Activated CD8-positive, alpha-beta T cell treated with anti-CD3 and anti-CD28 coated beads for 36 hours (primary cell): ENCODE measurements at regions of chr16 and their contacts with region 1.

Region 1: GRCh38 chr16:75110637-75111513 is 5.7 kb downstream of the LDHD start:
- DNase-seq: peak; percentile 92
- ATAC-seq: peak; percentile 80
- H3K4me3 Mint-ChIP-seq: peak overlapping the region; percentile 74
- H3K27ac Mint-ChIP-seq: peak overlapping the region; percentile 68
- H3K4me1 Mint-ChIP-seq: peaks cover 54% of the 10 kb centered on the region
- H3K27me3 Mint-ChIP-seq: peaks cover 10% of the 10 kb centered on the region
- CTCF ChIP-seq: peak; percentile 89

Region 2: GRCh38 chr16:74984535-74985296 is 126.2 kb before region 1 on chr16 and contains the start of gene WDR59:
- CTCF ChIA-PET with region 1: interaction called, 34 read pairs
- POLR2A ChIA-PET with region 1: interaction called, 9 read pairs
- intact Hi-C with region 1: no loop called
- DNase-seq: peak; percentile 100
- ATAC-seq: peak; percentile 99
- H3K4me3 Mint-ChIP-seq: peak within 1 kb of the TSS; percentile 86
- H3K27ac Mint-ChIP-seq: peak within 1 kb of the TSS; percentile 91
- H3K4me1 Mint-ChIP-seq: peaks cover 21% of the 10 kb centered on the region
- H3K27me3 Mint-ChIP-seq: no peaks in the 10 kb centered on the region
- CTCF ChIP-seq: no peak
- total RNA-seq, gene WDR59: 59.1 to 68.1 TPM

Region 3: GRCh38 chr16:75011634-75012307 is 99.1 kb before region 1 on chr16:
- CTCF ChIA-PET with region 1: interaction called, 48 read pairs
- POLR2A ChIA-PET with region 1: interaction called, 3 read pairs
- intact Hi-C with region 1: no loop called
- DNase-seq: peak; percentile 78
- ATAC-seq: peak; percentile 95
- H3K4me3 Mint-ChIP-seq: peak overlapping the region; percentile 39
- H3K27ac Mint-ChIP-seq: peak overlapping the region; percentile 83
- H3K4me1 Mint-ChIP-seq: peaks cover 32% of the 10 kb centered on the region
- H3K27me3 Mint-ChIP-seq: no peaks in the 10 kb centered on the region
- CTCF ChIP-seq: no peak

Region 4: GRCh38 chr16:75064403-75065148 is 46.3 kb before region 1 on chr16:
- CTCF ChIA-PET with region 1: interaction called, 14 read pairs
- POLR2A ChIA-PET with region 1: interaction called, 3 read pairs
- intact Hi-C with region 1: no loop called
- DNase-seq: peak; percentile 56
- ATAC-seq: peak; percentile 54
- H3K4me3 Mint-ChIP-seq: peak overlapping the region; percentile 55
- H3K27ac Mint-ChIP-seq: peak overlapping the region; percentile 68
- H3K4me1 Mint-ChIP-seq: peaks cover 30% of the 10 kb centered on the region
- H3K27me3 Mint-ChIP-seq: peaks cover 2% of the 10 kb centered on the region
- CTCF ChIP-seq: no peak

Region 5: DNA sequence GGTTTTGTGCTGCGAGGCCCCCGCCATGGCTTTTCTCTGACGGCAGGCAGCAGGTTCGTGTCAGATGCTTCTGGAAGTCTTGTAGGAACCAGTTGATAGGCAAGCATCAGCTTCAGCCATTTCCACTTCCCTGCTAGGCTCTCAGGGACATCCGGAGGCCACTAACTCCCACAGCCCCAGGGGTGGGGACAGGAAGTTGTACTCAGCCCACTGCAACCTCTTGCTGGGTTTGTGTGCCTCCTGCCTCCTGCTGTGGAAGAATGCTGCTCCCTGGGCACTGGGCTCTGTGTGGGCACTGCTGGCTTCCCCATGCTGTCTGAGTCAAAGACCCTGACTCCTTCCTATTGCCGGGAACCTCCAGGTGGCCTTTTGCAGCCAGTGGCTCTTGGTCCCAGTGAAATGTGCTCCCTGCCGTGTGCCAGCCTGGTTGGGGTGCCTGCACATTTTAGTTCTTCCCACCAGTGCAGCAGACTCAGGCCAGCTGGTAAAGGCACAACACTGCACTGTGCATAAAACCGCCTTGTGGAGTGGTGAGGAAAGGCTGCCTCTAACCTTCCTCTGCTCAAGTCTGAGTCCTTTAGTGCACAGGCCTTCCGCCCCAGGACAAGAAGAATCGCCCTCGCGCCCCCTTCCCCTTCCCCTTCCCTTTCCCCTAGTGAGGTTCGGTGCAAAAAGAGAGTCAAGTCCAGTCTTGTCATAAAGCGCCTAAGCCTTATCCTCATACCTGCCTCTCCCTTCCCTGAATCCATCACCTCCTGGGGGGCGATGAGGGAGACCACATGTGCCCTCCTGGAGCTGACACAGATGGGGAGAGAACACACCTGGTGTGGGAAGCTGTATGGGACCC is 10.9 kb before region 1 on chr16:
- CTCF ChIA-PET with region 1: interaction called, 50 read pairs
- POLR2A ChIA-PET with region 1: interaction called, 20 read pairs
- intact Hi-C with region 1: no loop called
- DNase-seq: peak; percentile 72
- ATAC-seq: peak; percentile 52
- H3K4me3 Mint-ChIP-seq: peak overlapping the region; percentile 24
- H3K27ac Mint-ChIP-seq: peak overlapping the region; percentile 92
- H3K4me1 Mint-ChIP-seq: peaks cover 54% of the 10 kb centered on the region
- H3K27me3 Mint-ChIP-seq: no peaks in the 10 kb centered on the region
- CTCF ChIP-seq: no peak

Region 6: GRCh38 chr16:75148311-75149195 is 37.7 kb after region 1 on chr16 and contains the start of gene ZFP1:
- CTCF ChIA-PET with region 1: interaction called, 13 read pairs
- POLR2A ChIA-PET with region 1: no interaction called
- intact Hi-C with region 1: no loop called
- DNase-seq: peak; percentile 98
- ATAC-seq: peak; percentile 92
- H3K4me3 Mint-ChIP-seq: peak within 1 kb of the TSS; percentile 84
- H3K27ac Mint-ChIP-seq: peak within 1 kb of the TSS; percentile 83
- H3K4me1 Mint-ChIP-seq: peaks cover 36% of the 10 kb centered on the region
- H3K27me3 Mint-ChIP-seq: no peaks in the 10 kb centered on the region
- CTCF ChIP-seq: no peak
- total RNA-seq, gene ZFP1: 19.8 to 23.9 TPM